ENCODE measurements at regions of chr13 and their contacts with region 1.

Region 1: DNA sequence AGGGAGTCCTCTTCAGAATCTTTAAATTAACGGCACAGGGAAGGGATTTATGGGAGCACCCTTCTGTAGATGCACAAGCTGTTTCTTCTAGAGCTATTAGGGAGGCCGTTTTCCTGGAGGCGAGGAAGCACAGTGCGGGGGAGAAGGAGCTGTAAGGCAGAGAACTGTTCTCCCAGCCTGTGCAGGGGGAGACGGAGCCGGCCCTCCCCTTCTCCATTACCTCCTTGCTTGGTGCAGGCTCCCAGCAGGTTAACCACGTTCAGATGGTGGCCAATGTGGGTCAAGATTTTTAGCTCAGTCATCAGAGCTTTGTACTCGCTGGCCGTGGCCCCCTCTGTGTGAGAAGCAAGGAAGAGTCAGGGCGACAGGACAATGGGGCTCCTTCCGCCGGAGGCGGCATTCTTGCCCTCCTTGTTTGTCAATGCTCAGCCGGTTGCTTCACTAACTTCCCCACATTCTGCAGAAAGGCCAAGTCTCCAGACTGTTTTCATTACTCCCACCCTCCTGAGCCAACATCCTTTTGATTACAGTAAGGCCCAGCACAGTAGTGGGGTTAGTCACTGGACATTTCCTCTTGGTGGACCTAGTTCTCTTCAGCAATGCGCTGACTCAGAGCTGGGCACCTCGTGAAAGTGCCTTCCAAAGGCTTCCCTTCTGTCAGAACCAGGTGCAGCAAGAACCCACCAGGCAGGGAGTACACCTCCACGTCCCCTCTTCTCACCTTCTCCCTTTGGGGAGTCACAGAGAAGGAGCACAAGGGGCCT is 165.4 kb downstream of the FLT1 start:
- DNase-seq: no peak
- H3K4me3 ChIP-seq: no peak overlapping the region
- H3K27ac ChIP-seq: no peak overlapping the region
- H3K27me3 ChIP-seq: no peaks in the 10 kb centered on the region
- CTCF ChIP-seq: no peak

Region 2: DNA sequence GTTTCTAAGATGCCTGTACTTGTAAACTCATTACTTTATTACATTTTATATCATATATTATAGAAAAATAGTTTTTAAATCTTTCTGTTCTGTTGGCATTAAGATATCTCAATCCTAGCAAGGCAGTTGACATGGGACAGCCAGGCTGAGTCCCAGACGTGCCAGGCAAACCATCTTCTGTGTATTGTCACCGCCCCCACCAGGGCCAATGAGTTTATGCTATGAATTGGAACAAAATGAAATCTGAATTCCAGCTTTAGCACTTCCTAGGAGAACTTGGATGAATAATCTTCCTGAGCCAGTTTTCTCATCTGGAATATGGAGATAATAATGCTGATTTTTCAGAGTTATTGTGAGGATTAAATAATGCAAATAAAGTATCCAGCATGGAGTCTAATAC is 617.2 kb before region 1 on chr13:
- intact Hi-C with region 1: no loop called
- DNase-seq: no peak
- H3K4me3 ChIP-seq: no peak overlapping the region
- H3K27ac ChIP-seq: no peak overlapping the region
- H3K27me3 ChIP-seq: peaks cover 0 to 29% (median 0%) of the 10 kb centered on the region in 45 donors
- CTCF ChIP-seq: peak in 11 of 56 donors; percentile 10 to 45 (median 24)

Region 3: GRCh38 chr13:28147495-28147894 is 182.1 kb before region 1 on chr13:
- intact Hi-C with region 1: no loop called
- DNase-seq: no peak
- H3K4me3 ChIP-seq: no peak overlapping the region
- H3K27ac ChIP-seq: no peak overlapping the region
- H3K27me3 ChIP-seq: no peaks in the 10 kb centered on the region
- CTCF ChIP-seq: no peak

Region 4: GRCh38 chr13:28318496-28318895 is 11.1 kb before region 1 on chr13:
- intact Hi-C with region 1: no loop called
- DNase-seq: no peak
- H3K4me3 ChIP-seq: no peak overlapping the region
- H3K27ac ChIP-seq: no peak overlapping the region
- H3K27me3 ChIP-seq: peaks cover 0 to 6% (median 0%) of the 10 kb centered on the region in 45 donors
- CTCF ChIP-seq: no peak

Region 5: GRCh38 chr13:28624707-28625432 is 295.3 kb after region 1 on chr13:
- intact Hi-C with region 1: loop called (anchors 5 to 10 kb)
- DNase-seq: peak in 1 of 10 donors; percentile 46
- H3K4me3 ChIP-seq: no peak overlapping the region
- H3K27ac ChIP-seq: peak overlapping the region in 1 of 59 donors; percentile 73
- H3K27me3 ChIP-seq: no peaks in the 10 kb centered on the region
- CTCF ChIP-seq: no peak